Common myeloid progenitor, CD34-positive (primary cell): ENCODE measurements at regions of chr10 and their contacts with region 1.

Region 1: GRCh38 chr10:43093423-43094076 is 16.7 kb downstream of the RET start:
- DNase-seq: peak; percentile 52 to 76 (median 74)
- H3K4me3 ChIP-seq: no peak overlapping the region
- H3K27ac ChIP-seq: no peak overlapping the region
- H3K4me1 ChIP-seq: peaks cover 0 to 19% (median 15%) of the 10 kb centered on the region in 4 experiments
- H3K27me3 ChIP-seq: no peaks in the 10 kb centered on the region

Region 2: DNA sequence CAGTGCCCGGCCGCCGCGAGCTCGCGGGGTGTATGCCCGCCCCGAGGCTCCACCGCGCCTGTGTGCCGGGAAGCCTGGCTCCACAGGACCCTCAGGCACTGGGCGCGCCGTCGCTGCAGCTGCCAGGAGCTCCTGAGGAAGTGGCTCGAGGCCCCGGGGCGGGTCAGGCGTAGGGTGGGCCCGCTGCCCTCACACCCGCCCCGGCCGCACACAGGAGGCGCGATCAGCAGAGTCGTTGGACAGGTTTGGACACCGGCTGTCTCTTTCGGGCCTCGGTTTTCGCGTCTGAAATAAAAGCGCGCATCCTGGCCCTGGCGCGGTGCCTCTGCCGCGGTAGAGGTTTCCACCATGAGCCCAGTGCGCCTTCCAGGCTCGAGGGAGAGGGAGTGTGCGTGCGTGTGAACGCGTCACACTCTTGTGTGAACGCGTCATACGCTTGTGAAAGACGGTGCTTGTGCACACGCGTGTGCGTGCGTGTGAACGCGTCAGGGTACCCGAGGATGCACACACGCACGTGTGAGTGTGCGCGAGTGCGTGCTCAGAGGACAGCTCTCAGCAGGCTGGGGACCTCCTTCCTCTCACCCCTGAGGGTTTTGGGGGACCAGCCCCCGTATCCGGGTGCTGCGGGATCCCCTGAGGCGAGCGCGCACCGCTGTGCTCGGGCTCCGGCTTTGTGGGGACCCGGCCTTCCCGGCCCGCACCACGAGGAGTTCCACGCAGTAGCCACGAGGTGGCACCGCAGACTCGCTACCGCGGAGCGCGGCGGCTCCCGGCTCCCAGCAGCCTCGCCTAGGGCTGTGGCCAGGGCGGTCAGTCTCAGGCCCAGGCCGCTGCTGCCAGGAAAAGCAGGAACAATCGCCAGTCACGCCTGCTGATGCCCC is 227.2 kb before region 1 on chr10:
- CTCF ChIA-PET with region 1: interaction called, 23 read pairs
- POLR2A ChIA-PET with region 1: interaction called, 3 read pairs
- DNase-seq: peak; percentile 57 to 74 (median 72)
- H3K4me3 ChIP-seq: peak overlapping the region in 6 of 7 experiments; percentile 22 to 63 (median 45)
- H3K27ac ChIP-seq: no peak overlapping the region
- H3K4me1 ChIP-seq: peaks cover 3 to 27% (median 20%) of the 10 kb centered on the region in 4 experiments
- H3K27me3 ChIP-seq: peaks cover 0 to 9% (median 0%) of the 10 kb centered on the region in 5 experiments

Region 3: GRCh38 chr10:43110338-43111086 is 17.0 kb after region 1 on chr10:
- CTCF ChIA-PET with region 1: no interaction called
- POLR2A ChIA-PET with region 1: no interaction called
- DNase-seq: peak in 2 of 3 donors; percentile 51 to 54
- H3K4me3 ChIP-seq: no peak overlapping the region
- H3K27ac ChIP-seq: no peak overlapping the region
- H3K4me1 ChIP-seq: peaks cover 0 to 43% (median 12%) of the 10 kb centered on the region in 4 experiments
- H3K27me3 ChIP-seq: no peaks in the 10 kb centered on the region